A673 (cell line): ENCODE measurements at regions of chr7 and their contacts with region 1.

Region 1: DNA sequence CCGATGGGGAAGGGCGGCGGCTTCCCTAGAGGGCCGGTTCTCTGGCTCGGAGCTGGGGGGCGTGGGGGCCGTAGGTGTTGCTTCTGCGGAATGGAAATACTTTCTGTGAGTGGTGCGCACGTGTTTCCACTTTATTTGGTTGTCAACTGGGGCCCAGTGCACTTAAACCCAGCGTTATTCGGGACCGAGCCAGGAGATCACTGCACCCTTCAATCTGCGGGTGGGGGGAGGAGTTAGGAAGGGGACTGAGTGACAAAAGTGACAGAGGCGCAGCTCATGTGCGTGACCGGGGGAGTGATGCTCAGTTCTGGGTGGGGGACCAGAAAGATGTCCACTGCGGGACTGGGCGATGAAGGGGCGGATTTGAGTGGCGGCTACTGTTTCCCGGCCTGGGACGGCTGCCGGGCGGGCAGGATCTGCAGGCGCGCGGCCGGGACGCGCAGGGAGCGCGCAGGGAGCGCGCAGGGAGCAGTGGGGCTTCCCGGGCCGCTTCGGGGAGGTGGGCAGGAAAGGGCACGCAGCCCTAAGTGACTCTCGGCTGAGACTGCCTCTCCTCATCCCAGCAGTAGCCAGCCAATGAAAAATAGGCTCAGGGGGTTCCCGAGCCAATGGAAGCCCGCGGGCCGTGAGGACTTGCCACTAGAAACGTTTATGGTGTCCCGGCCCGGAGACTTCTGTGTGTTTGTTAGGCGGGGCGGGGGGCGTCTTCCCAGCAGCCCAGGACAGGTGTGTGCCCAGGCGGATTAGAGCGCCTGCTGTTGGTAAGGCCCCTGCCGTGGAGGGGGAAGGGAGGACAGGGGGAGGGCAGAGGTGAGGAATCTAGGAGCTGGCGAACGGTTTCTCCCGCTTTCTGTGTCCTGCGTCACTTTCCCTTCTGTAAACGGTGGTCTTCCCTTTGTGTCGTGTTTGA is 54.3 kb upstream of the KDM7A start:
- DNase-seq: peak; percentile 54
- H3K4me3 ChIP-seq: peak overlapping the region; percentile 51
- H3K27ac ChIP-seq: no peak overlapping the region
- H3K4me1 ChIP-seq: no peaks in the 10 kb centered on the region
- H3K27me3 ChIP-seq: peaks cover 16% of the 10 kb centered on the region
- CTCF ChIP-seq: no peak

Region 2: GRCh38 chr7:140263277-140263676 is 32.2 kb after region 1 on chr7:
- CTCF ChIA-PET with region 1: no interaction called
- POLR2A ChIA-PET with region 1: interaction called, 19 read pairs
- intact Hi-C with region 1: no loop called
- DNase-seq: no peak
- H3K4me3 ChIP-seq: no peak overlapping the region
- H3K27ac ChIP-seq: no peak overlapping the region
- H3K4me1 ChIP-seq: no peaks in the 10 kb centered on the region
- H3K27me3 ChIP-seq: no peaks in the 10 kb centered on the region
- CTCF ChIP-seq: no peak